Astrocyte of the cerebellum (primary cell): ENCODE measurements at regions of chr4 and their contacts with region 1.

Region 1: DNA sequence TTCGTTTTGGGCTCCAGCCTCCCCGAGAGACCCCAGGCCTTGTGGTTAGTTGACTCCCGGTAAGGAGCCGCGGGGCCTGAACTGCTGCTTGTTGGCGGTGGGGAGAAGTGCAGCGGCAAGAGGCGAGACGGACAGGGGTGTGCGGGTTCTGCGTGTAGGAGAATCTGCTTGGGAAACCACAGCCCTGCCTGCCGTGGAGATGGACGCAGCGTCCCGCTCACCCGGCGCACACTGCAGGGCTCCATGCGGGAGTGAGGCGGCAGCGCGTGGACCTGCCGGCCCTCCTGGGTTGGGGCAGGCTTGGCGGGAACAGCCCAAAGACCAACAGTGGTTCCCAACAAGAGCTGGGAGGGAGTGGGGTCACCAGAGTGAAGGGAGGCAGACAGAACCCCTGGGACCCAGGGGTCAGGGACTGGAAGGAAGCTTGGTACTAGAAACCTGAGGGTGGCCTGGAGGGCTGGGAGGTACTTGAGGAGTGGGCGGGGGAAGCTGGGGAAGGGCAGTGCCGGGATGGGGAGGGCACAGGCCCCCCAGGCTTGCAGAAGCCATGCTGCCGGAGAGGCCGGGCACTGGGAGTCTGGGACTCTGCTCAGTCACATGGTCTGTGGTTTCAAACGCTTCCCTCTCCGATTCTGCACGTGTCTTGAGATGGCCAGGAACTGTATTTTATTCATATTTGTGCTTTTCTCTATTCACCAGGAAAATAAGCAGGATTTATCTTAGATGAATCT is 70.8 kb downstream of the RGS12 start:
- DNase-seq: no peak
- H3K4me3 ChIP-seq: no peak overlapping the region
- CTCF ChIP-seq: no peak

Region 2: GRCh38 chr4:3311489-3312184 is 51.9 kb before region 1 on chr4:
- in situ Hi-C with region 1: no loop called
- DNase-seq: no peak
- H3K4me3 ChIP-seq: no peak overlapping the region
- CTCF ChIP-seq: no peak

Region 3: DNA sequence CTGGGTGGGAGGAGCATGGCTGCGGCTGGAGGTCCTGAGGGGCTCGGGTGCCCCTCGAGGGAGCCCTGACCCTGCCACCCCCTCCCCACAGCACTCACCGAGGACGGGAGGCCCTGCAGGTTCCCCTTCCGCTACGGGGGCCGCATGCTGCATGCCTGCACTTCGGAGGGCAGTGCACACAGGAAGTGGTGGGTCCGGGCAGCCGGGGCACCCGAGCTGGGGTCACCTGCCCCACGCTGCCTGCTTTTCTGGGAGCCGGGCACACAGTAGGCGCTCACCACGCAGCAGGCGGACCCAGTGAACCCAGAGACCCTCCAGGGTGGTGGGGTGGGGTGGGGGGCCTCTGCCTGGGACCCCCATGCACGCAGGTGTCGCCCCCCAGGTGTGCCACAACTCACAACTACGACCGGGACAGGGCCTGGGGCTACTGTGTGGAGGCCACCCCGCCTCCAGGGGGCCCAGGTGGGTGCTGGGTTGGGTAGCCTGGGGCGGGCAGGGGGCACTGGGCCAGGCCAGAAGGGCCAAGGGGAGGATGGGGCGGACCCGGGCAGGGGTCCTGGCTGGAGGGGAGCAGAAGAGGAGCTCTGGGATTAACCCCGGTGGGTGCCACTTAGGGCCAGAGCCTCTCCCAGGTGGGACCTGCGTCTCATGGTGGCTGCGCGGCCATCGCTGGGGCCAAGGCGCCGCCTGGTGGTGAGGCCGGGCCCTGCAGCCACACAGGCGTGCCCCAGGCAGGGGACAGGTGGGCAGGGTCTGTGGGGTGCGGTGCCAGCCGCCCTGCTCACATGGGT is 79.6 kb after region 1 on chr4:
- in situ Hi-C with region 1: loop called (anchors 5 kb)
- DNase-seq: no peak
- H3K4me3 ChIP-seq: no peak overlapping the region
- CTCF ChIP-seq: peak; percentile 93